ENCODE measurements at regions of chr1 and their contacts with region 1.

Region 1: DNA sequence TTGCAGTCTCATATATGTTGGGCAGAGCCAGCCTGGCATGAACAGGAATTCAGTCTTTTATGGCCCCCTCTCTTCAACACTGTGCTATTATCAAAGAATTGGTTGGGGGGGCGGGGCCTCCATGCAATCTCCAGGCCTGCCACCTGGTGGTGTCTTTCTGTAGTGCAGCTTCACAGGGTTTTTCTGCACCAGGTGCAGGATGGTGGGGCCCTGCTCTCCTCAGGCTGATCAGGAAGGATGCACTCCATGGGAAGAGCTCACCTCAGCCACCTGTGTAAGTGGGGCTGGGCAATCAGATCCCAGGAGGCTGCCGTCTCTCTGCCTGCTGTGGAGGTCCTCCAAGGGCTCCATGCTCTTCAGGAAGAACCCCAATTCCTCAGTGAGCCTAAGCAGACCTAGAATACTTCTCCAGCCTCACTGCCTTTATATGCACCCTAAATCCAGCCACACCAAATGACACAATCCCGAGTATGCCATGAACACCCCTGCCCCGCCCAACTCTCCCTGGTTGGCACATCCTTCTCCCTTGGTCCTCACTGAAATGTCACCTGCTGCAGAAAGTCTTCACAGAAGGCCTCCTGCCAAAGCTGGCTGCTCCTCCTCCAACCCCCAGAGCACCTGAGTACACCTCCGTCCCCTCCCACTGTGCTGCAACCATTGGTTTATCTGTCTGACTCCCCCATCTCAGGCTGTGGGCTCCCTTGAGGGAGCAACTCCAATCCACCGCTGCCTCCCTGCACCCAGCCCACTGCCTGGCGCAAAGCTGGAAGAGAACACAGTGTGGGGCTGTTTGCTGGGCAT is 16.5 kb downstream of the STK40 start:
- DNase-seq: peak; percentile 86 to 94 (median 93)
- H3K4me3 ChIP-seq: no peak overlapping the region
- H3K27ac ChIP-seq: peak overlapping the region in 1 of 2 experiments; percentile 43
- H3K4me1 ChIP-seq: peaks cover 13 to 78% (median 71%) of the 10 kb centered on the region in 4 experiments
- H3K27me3 ChIP-seq: no peaks in the 10 kb centered on the region

Region 2: GRCh38 chr1:36323597-36324352 is 45.5 kb before region 1 on chr1 and contains the start of gene EVA1B:
- CTCF ChIA-PET with region 1: interaction called, 15 read pairs
- POLR2A ChIA-PET with region 1: no interaction called
- DNase-seq: peak in 2 of 3 donors; percentile 66 to 73
- H3K4me3 ChIP-seq: peak within 1 kb of the TSS; percentile 31 to 86 (median 76)
- H3K27ac ChIP-seq: peak within 1 kb of the TSS; percentile 50 to 79
- H3K4me1 ChIP-seq: peaks cover 4 to 69% (median 67%) of the 10 kb centered on the region in 4 experiments
- H3K27me3 ChIP-seq: no peaks in the 10 kb centered on the region

Region 3: GRCh38 chr1:36385410-36386257 is 16.4 kb after region 1 on chr1 and contains the start of gene STK40:
- CTCF ChIA-PET with region 1: interaction called, 24 read pairs
- POLR2A ChIA-PET with region 1: interaction called, 7 read pairs
- DNase-seq: peak; percentile 100
- H3K4me3 ChIP-seq: peak within 1 kb of the TSS; percentile 79 to 96 (median 89)
- H3K27ac ChIP-seq: peak within 1 kb of the TSS; percentile 95 to 99
- H3K4me1 ChIP-seq: peaks cover 16 to 50% (median 37%) of the 10 kb centered on the region in 4 experiments
- H3K27me3 ChIP-seq: no peaks in the 10 kb centered on the region

Region 4: GRCh38 chr1:36397378-36398230 is 28.3 kb after region 1 on chr1 and contains the start of gene LSM10:
- CTCF ChIA-PET with region 1: interaction called, 32 read pairs
- POLR2A ChIA-PET with region 1: interaction called, 3 read pairs
- DNase-seq: peak; percentile 91 to 95 (median 94)
- H3K4me3 ChIP-seq: peak within 1 kb of the TSS; percentile 84 to 91 (median 88)
- H3K27ac ChIP-seq: peak within 1 kb of the TSS; percentile 46 to 88
- H3K4me1 ChIP-seq: peaks cover 0 to 33% (median 24%) of the 10 kb centered on the region in 4 experiments
- H3K27me3 ChIP-seq: no peaks in the 10 kb centered on the region

Region 5: DNA sequence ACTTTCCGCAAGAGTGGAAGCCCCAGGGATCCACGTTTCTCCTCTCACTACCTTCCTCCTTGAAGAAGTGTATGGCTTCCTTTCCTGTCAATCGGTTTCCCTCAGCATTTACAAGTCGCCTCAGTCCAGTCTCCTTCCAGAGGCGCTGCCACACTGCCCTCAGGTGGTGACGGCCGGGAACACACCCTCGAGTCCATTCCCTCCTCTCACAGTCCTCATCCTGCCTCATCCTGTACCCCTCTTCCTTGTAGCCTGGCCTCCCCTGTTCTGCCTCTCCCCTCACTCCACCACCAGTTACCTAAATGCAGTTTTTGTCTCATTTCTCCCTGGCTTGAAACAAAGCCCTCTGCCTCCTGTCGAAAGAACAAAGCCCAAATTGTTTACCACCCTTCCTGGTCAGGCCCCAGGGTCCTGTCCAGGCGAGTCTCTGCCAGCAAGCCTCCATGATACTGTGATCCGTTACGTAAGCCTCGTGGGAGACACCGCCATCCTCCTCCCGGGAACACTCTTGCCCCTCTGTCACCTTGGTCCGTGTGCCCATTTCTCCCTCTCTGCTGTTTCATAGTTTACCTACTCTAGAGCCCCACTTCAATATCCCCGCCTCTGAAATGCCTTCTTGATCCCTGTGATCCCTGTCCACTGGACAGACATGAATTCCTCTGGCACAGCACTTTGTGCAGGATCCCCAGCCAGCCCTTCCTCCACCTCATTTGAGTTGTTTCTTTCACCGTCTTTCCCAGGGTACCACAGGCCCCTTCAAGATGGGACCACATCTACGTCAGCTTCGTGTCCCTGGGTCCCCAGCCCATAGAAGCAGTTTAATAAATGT is 51.8 kb after region 1 on chr1:
- CTCF ChIA-PET with region 1: interaction called, 10 read pairs
- POLR2A ChIA-PET with region 1: no interaction called
- DNase-seq: peak; percentile 73 to 87 (median 82)
- H3K4me3 ChIP-seq: no peak overlapping the region
- H3K27ac ChIP-seq: no peak overlapping the region
- H3K4me1 ChIP-seq: peaks cover 0 to 6% (median 5%) of the 10 kb centered on the region in 4 experiments
- H3K27me3 ChIP-seq: no peaks in the 10 kb centered on the region